CD8-positive, alpha-beta T cell (primary cell): ENCODE measurements at regions of chr5 and their contacts with region 1.

Region 1: GRCh38 chr5:168679515-168679920 is 100.3 kb upstream of the PANK3 start:
- DNase-seq: peak in 8 of 9 experiments; percentile 29 to 72 (median 61)
- ATAC-seq: peak; percentile 42
- H3K4me3 ChIP-seq: no peak overlapping the region
- H3K4me3 Mint-ChIP-seq: no peak overlapping the region
- H3K27ac ChIP-seq: no peak overlapping the region
- H3K27ac Mint-ChIP-seq: no peak overlapping the region
- H3K4me1 ChIP-seq: peaks cover 6% of the 10 kb centered on the region
- H3K4me1 Mint-ChIP-seq: peaks cover 7% of the 10 kb centered on the region
- H3K27me3 ChIP-seq: no peaks in the 10 kb centered on the region
- H3K27me3 Mint-ChIP-seq: no peaks in the 10 kb centered on the region
- CTCF ChIP-seq: peak; percentile 75

Region 2: DNA sequence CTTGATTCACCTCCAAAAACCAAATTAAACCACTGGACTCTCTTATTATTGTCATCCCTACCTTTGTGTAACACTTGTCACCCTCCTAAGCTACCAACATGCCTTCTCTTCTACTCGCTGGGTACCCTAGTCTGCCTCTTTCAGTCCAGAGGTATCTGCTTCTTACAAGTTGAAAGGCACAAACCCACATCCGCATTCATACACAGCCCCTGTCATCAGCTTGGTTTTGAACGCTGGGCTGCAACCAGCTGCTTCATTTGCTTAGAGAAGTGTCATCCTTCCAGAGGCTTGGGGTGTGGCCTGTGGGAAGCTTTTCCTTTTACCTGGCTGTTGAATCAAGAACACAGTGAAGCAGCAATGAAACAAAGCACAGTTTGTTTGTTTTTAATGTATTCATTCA is 526.9 kb before region 1 on chr5:
- CTCF ChIA-PET with region 1: no interaction called
- POLR2A ChIA-PET with region 1: no interaction called
- intact Hi-C with region 1: no loop called
- DNase-seq: peak in 1 of 9 experiments; percentile 16
- ATAC-seq: no peak
- H3K4me3 ChIP-seq: no peak overlapping the region
- H3K4me3 Mint-ChIP-seq: no peak overlapping the region
- H3K27ac ChIP-seq: no peak overlapping the region
- H3K27ac Mint-ChIP-seq: no peak overlapping the region
- H3K4me1 ChIP-seq: no peaks in the 10 kb centered on the region
- H3K4me1 Mint-ChIP-seq: no peaks in the 10 kb centered on the region
- H3K27me3 ChIP-seq: no peaks in the 10 kb centered on the region
- H3K27me3 Mint-ChIP-seq: peaks cover 16% of the 10 kb centered on the region
- CTCF ChIP-seq: no peak

Region 3: DNA sequence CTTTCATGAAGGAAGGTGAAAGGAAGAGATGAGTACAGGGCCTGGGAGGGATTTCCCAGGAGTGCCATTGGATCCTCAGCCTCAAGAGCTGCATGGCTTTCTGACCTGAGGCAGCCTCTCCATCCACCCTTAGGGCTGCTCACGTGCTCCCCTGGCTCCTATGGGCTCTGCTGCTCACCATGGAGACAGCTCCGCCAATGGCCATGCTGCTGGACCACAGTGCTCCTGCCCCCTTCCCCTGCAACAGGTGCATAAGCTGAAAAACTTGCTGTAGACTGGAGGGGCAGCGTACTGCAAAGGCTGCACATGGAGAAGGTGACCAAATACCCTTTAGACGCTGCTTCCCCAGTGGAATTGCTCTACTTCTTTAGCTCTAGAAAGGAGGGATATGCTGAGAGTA is 12.4 kb after region 1 on chr5:
- CTCF ChIA-PET with region 1: interaction called, 27 read pairs
- POLR2A ChIA-PET with region 1: no interaction called
- intact Hi-C with region 1: no loop called
- DNase-seq: no peak
- ATAC-seq: no peak
- H3K4me3 ChIP-seq: no peak overlapping the region
- H3K4me3 Mint-ChIP-seq: no peak overlapping the region
- H3K27ac ChIP-seq: no peak overlapping the region
- H3K27ac Mint-ChIP-seq: no peak overlapping the region
- H3K4me1 ChIP-seq: no peaks in the 10 kb centered on the region
- H3K4me1 Mint-ChIP-seq: no peaks in the 10 kb centered on the region
- H3K27me3 ChIP-seq: no peaks in the 10 kb centered on the region
- H3K27me3 Mint-ChIP-seq: no peaks in the 10 kb centered on the region
- CTCF ChIP-seq: no peak

Region 4: GRCh38 chr5:168987543-168988300 is 308.2 kb after region 1 on chr5:
- CTCF ChIA-PET with region 1: no interaction called
- POLR2A ChIA-PET with region 1: no interaction called
- intact Hi-C with region 1: loop called in 1 of 2 experiments (anchors 5 kb)
- DNase-seq: peak in 7 of 9 experiments; percentile 26 to 57 (median 45)
- ATAC-seq: no peak
- H3K4me3 ChIP-seq: no peak overlapping the region
- H3K4me3 Mint-ChIP-seq: no peak overlapping the region
- H3K27ac ChIP-seq: no peak overlapping the region
- H3K27ac Mint-ChIP-seq: no peak overlapping the region
- H3K4me1 ChIP-seq: no peaks in the 10 kb centered on the region
- H3K4me1 Mint-ChIP-seq: no peaks in the 10 kb centered on the region
- H3K27me3 ChIP-seq: peaks cover 0 to 5% of the 10 kb centered on the region in 2 experiments
- H3K27me3 Mint-ChIP-seq: peaks cover 15% of the 10 kb centered on the region
- CTCF ChIP-seq: peak; percentile 64

Region 5: GRCh38 chr5:169302491-169303118 is 623.1 kb after region 1 on chr5:
- CTCF ChIA-PET with region 1: no interaction called
- POLR2A ChIA-PET with region 1: no interaction called
- intact Hi-C with region 1: loop called in 1 of 2 experiments (anchors 5 kb)
- DNase-seq: peak in 7 of 9 experiments; percentile 5 to 57 (median 37)
- ATAC-seq: no peak
- H3K4me3 ChIP-seq: no peak overlapping the region
- H3K4me3 Mint-ChIP-seq: no peak overlapping the region
- H3K27ac ChIP-seq: no peak overlapping the region
- H3K27ac Mint-ChIP-seq: no peak overlapping the region
- H3K4me1 ChIP-seq: no peaks in the 10 kb centered on the region
- H3K4me1 Mint-ChIP-seq: peaks cover 8% of the 10 kb centered on the region
- H3K27me3 ChIP-seq: peaks cover 3 to 8% of the 10 kb centered on the region in 2 experiments
- H3K27me3 Mint-ChIP-seq: peaks cover 46% of the 10 kb centered on the region
- CTCF ChIP-seq: peak; percentile 49

Region 6: GRCh38 chr5:169577951-169578350 is 898.4 kb after region 1 on chr5:
- CTCF ChIA-PET with region 1: interaction called, 9 read pairs
- POLR2A ChIA-PET with region 1: no interaction called
- intact Hi-C with region 1: loop called in 1 of 2 experiments (anchors 2 kb)
- DNase-seq: no peak
- ATAC-seq: no peak
- H3K4me3 ChIP-seq: no peak overlapping the region
- H3K4me3 Mint-ChIP-seq: no peak overlapping the region
- H3K27ac ChIP-seq: no peak overlapping the region
- H3K27ac Mint-ChIP-seq: no peak overlapping the region
- H3K4me1 ChIP-seq: no peaks in the 10 kb centered on the region
- H3K4me1 Mint-ChIP-seq: peaks cover 7% of the 10 kb centered on the region
- H3K27me3 ChIP-seq: no peaks in the 10 kb centered on the region
- H3K27me3 Mint-ChIP-seq: peaks cover 20% of the 10 kb centered on the region
- CTCF ChIP-seq: no peak